OCI-LY7 (cell line): ENCODE measurements at regions of chr11 and their contacts with region 1.

Region 1: GRCh38 chr11:95200781-95201457 is 30.1 kb downstream of the SESN3 start:
- DNase-seq: no peak
- H3K4me3 ChIP-seq: no peak overlapping the region
- H3K27ac ChIP-seq: no peak overlapping the region
- H3K4me1 ChIP-seq: no peaks in the 10 kb centered on the region
- CTCF ChIP-seq: no peak

Region 2: DNA sequence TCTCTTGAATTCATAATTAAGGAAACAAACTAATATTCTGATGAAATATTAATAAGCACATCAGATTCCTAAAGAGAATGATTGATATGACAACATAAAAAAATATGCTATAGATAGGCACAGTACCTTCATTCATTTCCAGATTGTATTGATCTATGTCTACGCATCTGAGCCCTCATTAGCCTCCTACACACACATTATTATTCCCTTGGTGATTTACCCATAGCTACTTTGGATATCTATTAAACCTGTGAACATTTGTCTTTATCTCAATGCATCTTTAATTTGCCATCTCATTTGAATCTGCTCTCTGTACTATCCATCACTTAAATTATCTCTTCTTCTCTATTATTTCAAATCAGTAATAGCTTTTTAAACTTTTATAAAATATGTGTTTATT is 11.7 kb after region 1 on chr11:
- CTCF ChIA-PET with region 1: no interaction called
- POLR2A ChIA-PET with region 1: interaction called, 15 read pairs
- intact Hi-C with region 1: no loop called
- DNase-seq: no peak
- H3K4me3 ChIP-seq: no peak overlapping the region
- H3K27ac ChIP-seq: no peak overlapping the region
- H3K4me1 ChIP-seq: peaks cover 8% of the 10 kb centered on the region
- CTCF ChIP-seq: no peak